ENCODE measurements at regions of chr12 and their contacts with region 1.

Region 1: DNA sequence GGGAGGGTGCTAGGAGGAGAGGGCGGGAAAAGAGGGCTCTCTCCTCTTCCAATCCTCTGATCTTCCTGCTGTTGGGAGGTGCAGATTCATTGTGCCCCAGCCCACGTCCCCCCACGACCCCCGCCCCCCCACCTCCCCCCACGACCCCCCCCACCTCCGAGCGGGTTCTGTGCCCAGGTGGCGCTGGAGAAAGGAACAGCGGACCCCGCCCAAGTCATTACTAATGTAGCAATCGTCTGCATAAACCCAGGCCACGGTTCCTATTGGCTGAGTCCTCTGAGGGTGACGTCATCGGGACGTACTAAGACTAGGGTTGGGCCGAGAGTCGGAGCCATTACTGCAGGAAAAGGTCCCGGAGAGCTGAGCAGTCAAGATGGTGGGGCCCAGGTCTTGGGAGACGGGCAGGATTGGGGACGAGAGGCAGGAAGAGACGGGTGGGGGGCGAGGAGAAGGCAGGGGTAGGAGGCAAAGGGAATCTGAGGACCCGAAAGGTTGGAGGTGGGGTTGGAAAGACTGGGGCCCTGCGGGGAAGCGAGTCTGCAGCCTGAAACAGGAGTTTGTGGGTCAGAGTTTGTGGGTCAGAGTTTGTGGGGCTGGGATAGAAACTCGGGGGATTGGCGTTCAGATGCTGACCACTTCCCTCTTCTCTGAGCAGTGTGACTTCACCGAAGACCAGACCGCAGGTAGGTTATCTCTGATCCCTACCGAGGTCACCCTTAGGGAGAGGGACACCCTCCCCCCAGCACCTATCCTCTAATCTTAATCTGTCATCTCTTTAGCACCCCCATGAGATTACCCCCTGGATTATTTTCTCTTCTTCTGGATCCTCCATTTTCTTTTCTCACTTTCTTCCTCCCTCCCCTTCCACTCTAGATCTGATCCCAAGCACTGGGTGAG is at the start of gene MYL6:
- DNase-seq: peak; percentile 95 to 97
- ATAC-seq: peak; percentile 95
- H3K4me3 ChIP-seq: peak within 1 kb of the TSS; percentile 78 to 96
- H3K27ac ChIP-seq: peak within 1 kb of the TSS; percentile 62 to 82
- H3K4me1 ChIP-seq: no peaks in the 10 kb centered on the region
- H3K27me3 ChIP-seq: no peaks in the 10 kb centered on the region
- total RNA-seq, gene MYL6: 1,811 to 3,292 TPM

Region 2: DNA sequence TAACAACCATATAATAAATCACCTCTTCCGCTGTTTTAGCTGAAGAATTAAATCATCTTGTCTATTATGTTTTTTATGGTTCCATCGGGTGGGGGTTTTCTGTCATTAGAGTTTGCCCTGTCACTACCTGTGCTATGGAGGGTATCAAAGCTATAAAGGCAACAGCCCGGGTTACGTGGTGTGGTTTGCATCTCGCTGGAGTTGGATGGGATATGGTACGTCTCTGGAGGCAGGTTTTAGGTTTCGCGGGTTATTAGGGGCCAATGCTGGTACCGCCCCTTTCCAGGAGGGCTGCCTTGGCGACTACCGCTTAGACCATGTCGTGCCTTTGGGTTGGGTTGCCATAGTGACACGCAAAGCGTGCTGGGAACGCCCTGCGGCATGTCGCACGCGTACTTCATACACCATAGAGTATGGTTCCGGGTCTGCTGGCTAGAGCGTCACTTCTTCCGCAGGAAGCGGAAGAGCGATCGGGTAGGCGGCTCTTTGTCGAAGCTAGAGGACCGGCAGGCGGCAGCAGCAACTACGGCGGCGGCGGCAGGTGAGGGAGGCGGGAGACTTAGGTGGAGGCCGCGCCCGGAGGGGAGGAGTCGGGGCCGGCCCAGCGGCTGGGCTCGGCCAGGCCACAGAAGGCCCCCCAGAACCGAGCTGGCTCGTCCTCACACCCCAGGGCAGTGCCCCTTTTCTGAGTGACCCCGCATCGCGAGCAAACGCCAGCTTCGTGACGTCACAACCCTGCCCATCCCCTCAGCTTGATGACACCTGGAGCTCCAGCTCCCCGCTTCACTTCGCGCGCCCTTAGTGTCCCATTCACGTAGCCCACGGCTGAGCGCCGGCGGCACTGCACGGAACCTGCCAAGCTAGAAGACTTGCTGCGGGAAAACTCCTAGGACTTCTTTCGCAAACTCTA is 40.2 kb before region 1 on chr12 and contains the start of gene ZC3H10:
- intact Hi-C with region 1: loop called (anchors 2 to 5 kb)
- DNase-seq: peak; percentile 98 to 99
- ATAC-seq: peak; percentile 92
- H3K4me3 ChIP-seq: peak within 1 kb of the TSS; percentile 93 to 99
- H3K27ac ChIP-seq: peak within 1 kb of the TSS; percentile 91 to 98
- H3K4me1 ChIP-seq: peaks cover 0 to 6% of the 10 kb centered on the region in 2 donors
- H3K27me3 ChIP-seq: peaks cover 0 to 3% of the 10 kb centered on the region in 2 donors
- total RNA-seq, gene ZC3H10: 8.9 to 9.6 TPM